ENCODE measurements at regions of chr7 and their contacts with region 1.

Region 1: GRCh38 chr7:28479507-28479947 is 67.2 kb downstream of the CREB5 start:
- H3K4me3 Mint-ChIP-seq: no peak overlapping the region
- H3K27ac Mint-ChIP-seq: no peak overlapping the region
- H3K4me1 Mint-ChIP-seq: peaks cover 18% of the 10 kb centered on the region
- H3K27me3 Mint-ChIP-seq: peaks cover 13% of the 10 kb centered on the region

Region 2: GRCh38 chr7:27242555-27243339 is 1236.8 kb before region 1 on chr7 and contains the start of gene EVX1:
- intact Hi-C with region 1: no loop called
- H3K4me3 Mint-ChIP-seq: no peak within 1 kb of the TSS
- H3K27ac Mint-ChIP-seq: no peak within 1 kb of the TSS
- H3K4me1 Mint-ChIP-seq: peaks cover 54% of the 10 kb centered on the region
- H3K27me3 Mint-ChIP-seq: peaks cover 96% of the 10 kb centered on the region

Region 3: GRCh38 chr7:28466341-28466740 is 13.2 kb before region 1 on chr7:
- intact Hi-C with region 1: no loop called
- H3K4me3 Mint-ChIP-seq: no peak overlapping the region
- H3K27ac Mint-ChIP-seq: no peak overlapping the region
- H3K4me1 Mint-ChIP-seq: peaks cover 6% of the 10 kb centered on the region
- H3K27me3 Mint-ChIP-seq: peaks cover 44% of the 10 kb centered on the region

Region 4: GRCh38 chr7:28536259-28536658 is 56.7 kb after region 1 on chr7:
- intact Hi-C with region 1: loop called (anchors 10 kb)
- H3K4me3 Mint-ChIP-seq: no peak overlapping the region
- H3K27ac Mint-ChIP-seq: no peak overlapping the region
- H3K4me1 Mint-ChIP-seq: peaks cover 18% of the 10 kb centered on the region
- H3K27me3 Mint-ChIP-seq: peaks cover 30% of the 10 kb centered on the region